ENCODE measurements at regions of chr20 and their contacts with region 1.

Region 1: GRCh38 chr20:8043687-8044282 is 24.2 kb upstream of the TMX4 start:
- DNase-seq: peak in 1 of 2 donors; percentile 39
- ATAC-seq: peak in 6 of 8 donors; percentile 42 to 75 (median 64)
- H3K4me3 ChIP-seq: no peak overlapping the region
- H3K27ac ChIP-seq: no peak overlapping the region
- H3K4me1 ChIP-seq: peaks cover 0 to 6% (median 0%) of the 10 kb centered on the region in 9 donors
- H3K27me3 ChIP-seq: no peaks in the 10 kb centered on the region
- CTCF ChIP-seq: peak; percentile 63 to 85 (median 77)

Region 2: GRCh38 chr20:7989379-7989778 is 54.4 kb before region 1 on chr20:
- intact Hi-C with region 1: no loop called
- DNase-seq: no peak
- ATAC-seq: no peak
- H3K4me3 ChIP-seq: no peak overlapping the region
- H3K27ac ChIP-seq: no peak overlapping the region
- H3K4me1 ChIP-seq: peaks cover 0 to 6% (median 0%) of the 10 kb centered on the region in 9 donors
- H3K27me3 ChIP-seq: no peaks in the 10 kb centered on the region
- CTCF ChIP-seq: peak in 3 of 9 donors; percentile 12 to 18 (median 13)

Region 3: GRCh38 chr20:8062756-8063155 is 19.0 kb after region 1 on chr20:
- intact Hi-C with region 1: no loop called
- DNase-seq: no peak
- ATAC-seq: no peak
- H3K4me3 ChIP-seq: no peak overlapping the region
- H3K27ac ChIP-seq: no peak overlapping the region
- H3K4me1 ChIP-seq: no peaks in the 10 kb centered on the region
- H3K27me3 ChIP-seq: no peaks in the 10 kb centered on the region
- CTCF ChIP-seq: no peak

Region 4: GRCh38 chr20:8399947-8400346 is 356.2 kb after region 1 on chr20:
- intact Hi-C with region 1: loop called in 2 of 10 experiments (anchors 5 to 10 kb)
- DNase-seq: no peak
- ATAC-seq: peak in 4 of 8 donors; percentile 25 to 39 (median 36)
- H3K4me3 ChIP-seq: no peak overlapping the region
- H3K27ac ChIP-seq: no peak overlapping the region
- H3K4me1 ChIP-seq: peaks cover 0 to 22% (median 12%) of the 10 kb centered on the region in 9 donors
- H3K27me3 ChIP-seq: no peaks in the 10 kb centered on the region
- CTCF ChIP-seq: no peak

Measured in heart right ventricle (tissue), 16 donors.